GM12878 (cell line): ENCODE measurements at regions of chr12 and their contacts with region 1.

Region 1: DNA sequence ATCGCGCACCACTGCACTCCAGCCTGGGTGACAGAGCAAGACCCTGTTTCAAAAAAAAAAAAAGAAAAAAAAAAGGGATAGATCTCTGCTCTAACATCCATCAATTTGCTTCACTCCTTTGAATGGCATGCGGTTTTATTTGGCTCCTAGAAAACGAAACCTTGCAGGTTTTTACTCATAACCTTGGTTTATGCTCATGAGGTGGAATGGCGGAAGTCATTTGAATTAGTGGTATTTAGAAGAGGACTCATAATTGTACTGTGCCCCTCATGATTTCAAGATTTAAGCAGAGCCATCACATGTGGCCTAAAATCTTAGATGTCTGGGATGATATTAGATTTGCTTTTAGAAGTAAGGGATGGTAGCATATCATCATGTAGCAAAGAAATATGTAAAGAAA is 29.4 kb downstream of the RBMS2 start:
- DNase-seq: no peak
- ATAC-seq: peak; percentile 52
- H3K4me3 ChIP-seq: no peak overlapping the region
- H3K27ac ChIP-seq: no peak overlapping the region
- H3K4me1 ChIP-seq: 0 out of 2 replicates have a peak, but pooled peaks cover 4% of the 10 kb centered on the region
- H3K27me3 ChIP-seq: no peaks in the 10 kb centered on the region
- CTCF ChIP-seq: no peak
- EP300 ChIP-seq: no peak
- POLR2A ChIP-seq: no peak
- RAD21 ChIP-seq: no peak

Region 2: DNA sequence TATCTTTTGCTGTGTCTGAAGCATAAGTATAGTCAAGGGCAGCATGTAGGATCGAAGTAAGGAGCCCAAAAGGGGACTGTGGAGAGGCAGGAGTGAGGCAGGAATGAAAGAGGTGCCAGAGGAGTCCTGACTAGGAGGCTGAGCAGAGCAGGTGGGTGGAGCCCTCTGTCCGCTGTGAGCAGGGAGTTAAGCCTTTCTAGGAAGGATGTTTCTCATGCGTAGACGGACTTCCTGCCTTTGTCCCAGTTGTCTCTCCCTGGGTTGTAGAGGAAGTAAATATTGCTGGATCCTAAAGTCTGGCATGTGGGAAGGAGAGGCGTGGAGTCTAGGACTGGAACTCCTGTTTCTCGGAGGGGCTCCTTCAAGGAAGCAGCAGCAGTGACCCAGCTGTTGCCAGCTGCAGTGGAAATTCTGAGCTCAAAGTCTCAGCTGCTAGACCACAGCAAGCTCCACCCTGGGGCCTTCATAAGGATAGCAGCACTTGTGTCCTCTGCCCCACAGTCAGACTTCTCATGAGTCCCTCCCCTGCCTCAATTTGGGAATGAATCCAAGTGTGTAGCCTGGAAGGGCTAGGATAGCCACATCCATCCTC is 14.5 kb after region 1 on chr12:
- CTCF ChIA-PET with region 1: no interaction called
- POLR2A ChIA-PET with region 1: no interaction called
- RAD21 ChIA-PET with region 1: no interaction called
- SMC1A ChIA-PET with region 1: interaction called, 10 read pairs
- in situ Hi-C with region 1: no loop called
- intact Hi-C with region 1: no loop called
- DNase-seq: no peak
- ATAC-seq: peak; percentile 84
- H3K4me3 ChIP-seq: peak overlapping the region; percentile 30; the same call in 1 of the 2 replicates
- H3K27ac ChIP-seq: no peak overlapping the region
- H3K4me1 ChIP-seq: peaks cover 10% of the 10 kb centered on the region
- H3K27me3 ChIP-seq: no peaks in the 10 kb centered on the region
- CTCF ChIP-seq: no peak
- EP300 ChIP-seq: no peak
- POLR2A ChIP-seq: no peak
- RAD21 ChIP-seq: no peak

Region 3: GRCh38 chr12:56694161-56694560 is 143.1 kb after region 1 on chr12:
- CTCF ChIA-PET with region 1: no interaction called
- POLR2A ChIA-PET with region 1: no interaction called
- RAD21 ChIA-PET with region 1: no interaction called
- SMC1A ChIA-PET with region 1: no interaction called
- in situ Hi-C with region 1: no loop called
- intact Hi-C with region 1: no loop called
- DNase-seq: no peak
- ATAC-seq: no peak
- H3K4me3 ChIP-seq: no peak overlapping the region
- H3K27ac ChIP-seq: no peak overlapping the region
- H3K4me1 ChIP-seq: no peaks in the 10 kb centered on the region
- H3K27me3 ChIP-seq: no peaks in the 10 kb centered on the region
- CTCF ChIP-seq: no peak
- EP300 ChIP-seq: no peak
- POLR2A ChIP-seq: no peak
- RAD21 ChIP-seq: no peak